ENCODE measurements at regions of chr9 and their contacts with region 1.

Region 1: GRCh38 chr9:23123048-23123632 is 676.5 kb downstream of the DMRTA1 start:
- DNase-seq: peak; percentile 13
- H3K4me3 ChIP-seq: no peak overlapping the region; a peak in 1 of 4 replicates
- H3K27ac ChIP-seq: no peak overlapping the region
- H3K4me1 ChIP-seq: no peaks in the 10 kb centered on the region
- H3K27me3 ChIP-seq: no peaks in the 10 kb centered on the region
- CTCF ChIP-seq: peak; percentile 80
- EP300 ChIP-seq: no peak
- RAD21 ChIP-seq: peak; percentile 68

Region 2: GRCh38 chr9:23245067-23245466 is 121.9 kb after region 1 on chr9:
- CTCF ChIA-PET with region 1: no interaction called
- POLR2A ChIA-PET with region 1: no interaction called
- DNase-seq: no peak
- H3K4me3 ChIP-seq: no peak overlapping the region
- H3K27ac ChIP-seq: no peak overlapping the region
- H3K4me1 ChIP-seq: no peaks in the 10 kb centered on the region
- H3K27me3 ChIP-seq: no peaks in the 10 kb centered on the region
- CTCF ChIP-seq: no peak
- EP300 ChIP-seq: no peak
- RAD21 ChIP-seq: no peak

Region 3: GRCh38 chr9:23492126-23493002 is 369.2 kb after region 1 on chr9:
- CTCF ChIA-PET with region 1: interaction called, 10 read pairs
- POLR2A ChIA-PET with region 1: no interaction called
- DNase-seq: peak; percentile 46
- H3K4me3 ChIP-seq: peak overlapping the region in 1 of 2 experiments; percentile 24; a peak in 1 of 4 replicates
- H3K27ac ChIP-seq: no peak overlapping the region
- H3K4me1 ChIP-seq: no peaks in the 10 kb centered on the region; a peak in 1 of 4 replicates
- H3K27me3 ChIP-seq: no peaks in the 10 kb centered on the region
- CTCF ChIP-seq: peak; percentile 54
- EP300 ChIP-seq: no peak
- RAD21 ChIP-seq: peak; percentile 78